CD8-positive, alpha-beta T cell (primary cell): ENCODE measurements at regions of chr16 and their contacts with region 1.

Region 1: DNA sequence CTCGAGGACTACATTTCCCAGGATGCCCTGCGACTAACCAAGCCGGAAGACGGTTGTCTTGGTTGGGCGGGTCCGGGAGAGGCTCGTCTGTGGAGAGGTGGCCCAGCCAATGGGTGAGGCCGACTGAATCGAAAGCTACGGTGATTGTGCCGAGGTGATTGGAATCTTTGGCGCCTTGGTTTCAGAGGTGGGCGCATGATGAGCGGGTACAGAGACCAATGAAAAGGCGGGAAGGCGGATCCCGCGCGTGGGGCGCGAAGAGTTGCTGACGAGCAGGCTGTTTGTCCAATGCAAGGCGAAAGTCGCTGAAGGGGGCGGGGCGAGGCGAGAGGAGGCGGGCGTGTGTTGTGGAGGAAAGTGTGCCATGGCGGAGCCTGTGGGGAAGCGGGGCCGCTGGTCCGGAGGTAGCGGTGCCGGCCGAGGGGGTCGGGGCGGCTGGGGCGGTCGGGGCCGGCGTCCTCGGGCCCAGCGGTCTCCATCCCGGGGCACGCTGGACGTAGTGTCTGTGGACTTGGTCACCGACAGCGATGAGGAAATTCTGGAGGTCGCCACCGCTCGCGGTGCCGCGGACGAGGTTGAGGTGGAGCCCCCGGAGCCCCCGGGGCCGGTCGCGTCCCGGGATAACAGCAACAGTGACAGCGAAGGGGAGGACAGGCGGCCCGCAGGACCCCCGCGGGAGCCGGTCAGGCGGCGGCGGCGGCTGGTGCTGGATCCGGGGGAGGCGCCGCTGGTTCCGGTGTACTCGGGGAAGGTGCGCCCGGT is at the start of gene NFATC2IP:
- DNase-seq: peak; percentile 98 to 100 (median 100)
- ATAC-seq: peak; percentile 92
- H3K4me3 ChIP-seq: peak within 1 kb of the TSS; percentile 67 to 75
- H3K4me3 Mint-ChIP-seq: peak within 1 kb of the TSS; percentile 89
- H3K27ac ChIP-seq: peak within 1 kb of the TSS; percentile 61 to 73
- H3K27ac Mint-ChIP-seq: peak within 1 kb of the TSS; percentile 85
- H3K4me1 ChIP-seq: peaks cover 17% of the 10 kb centered on the region
- H3K4me1 Mint-ChIP-seq: peaks cover 29% of the 10 kb centered on the region
- H3K27me3 ChIP-seq: no peaks in the 10 kb centered on the region
- H3K27me3 Mint-ChIP-seq: no peaks in the 10 kb centered on the region
- CTCF ChIP-seq: no peak
- total RNA-seq, gene NFATC2IP: 45.8 to 52.5 TPM

Region 2: GRCh38 chr16:28823872-28824716 is 126.7 kb before region 1 on chr16:
- CTCF ChIA-PET with region 1: no interaction called
- POLR2A ChIA-PET with region 1: interaction called, 3 read pairs
- intact Hi-C with region 1: loop called (anchors 1 kb)
- DNase-seq: peak; percentile 88 to 97 (median 95)
- ATAC-seq: peak; percentile 67
- H3K4me3 ChIP-seq: peak overlapping the region; percentile 74 to 94
- H3K4me3 Mint-ChIP-seq: peak overlapping the region; percentile 97
- H3K27ac ChIP-seq: peak overlapping the region; percentile 93 to 94
- H3K27ac Mint-ChIP-seq: peak overlapping the region; percentile 99
- H3K4me1 ChIP-seq: peaks cover 30% of the 10 kb centered on the region
- H3K4me1 Mint-ChIP-seq: peaks cover 43% of the 10 kb centered on the region
- H3K27me3 ChIP-seq: no peaks in the 10 kb centered on the region
- H3K27me3 Mint-ChIP-seq: no peaks in the 10 kb centered on the region
- CTCF ChIP-seq: peak; percentile 21

Region 3: GRCh38 chr16:28873536-28874201 is 77.2 kb before region 1 on chr16:
- CTCF ChIA-PET with region 1: interaction called, 32 read pairs
- POLR2A ChIA-PET with region 1: interaction called, 3 read pairs
- intact Hi-C with region 1: no loop called
- DNase-seq: peak; percentile 37 to 73 (median 64)
- ATAC-seq: peak; percentile 96
- H3K4me3 ChIP-seq: no peak overlapping the region
- H3K4me3 Mint-ChIP-seq: no peak overlapping the region
- H3K27ac ChIP-seq: no peak overlapping the region
- H3K27ac Mint-ChIP-seq: no peak overlapping the region
- H3K4me1 ChIP-seq: no peaks in the 10 kb centered on the region
- H3K4me1 Mint-ChIP-seq: peaks cover 1% of the 10 kb centered on the region
- H3K27me3 ChIP-seq: no peaks in the 10 kb centered on the region
- H3K27me3 Mint-ChIP-seq: no peaks in the 10 kb centered on the region
- CTCF ChIP-seq: peak; percentile 66

Region 4: GRCh38 chr16:28930652-28931051 is 20.2 kb before region 1 on chr16:
- CTCF ChIA-PET with region 1: interaction called, 18 read pairs
- POLR2A ChIA-PET with region 1: interaction called, 18 read pairs
- intact Hi-C with region 1: loop called (anchors 1 kb)
- DNase-seq: peak in 1 of 9 experiments; percentile 51
- ATAC-seq: no peak
- H3K4me3 ChIP-seq: no peak overlapping the region
- H3K4me3 Mint-ChIP-seq: peak overlapping the region; percentile 5
- H3K27ac ChIP-seq: peak overlapping the region in 1 of 2 experiments; percentile 53
- H3K27ac Mint-ChIP-seq: peak overlapping the region; percentile 69
- H3K4me1 ChIP-seq: peaks cover 17% of the 10 kb centered on the region
- H3K4me1 Mint-ChIP-seq: peaks cover 25% of the 10 kb centered on the region
- H3K27me3 ChIP-seq: no peaks in the 10 kb centered on the region
- H3K27me3 Mint-ChIP-seq: no peaks in the 10 kb centered on the region
- CTCF ChIP-seq: no peak

Region 5: GRCh38 chr16:28984619-28985135 is 33.8 kb after region 1 on chr16 and contains the start of gene LAT:
- CTCF ChIA-PET with region 1: interaction called, 3 read pairs
- POLR2A ChIA-PET with region 1: interaction called, 5 read pairs
- intact Hi-C with region 1: loop called in 1 of 2 experiments (anchors 1 kb)
- DNase-seq: peak; percentile 60 to 91 (median 85)
- ATAC-seq: peak; percentile 69
- H3K4me3 ChIP-seq: peak within 1 kb of the TSS; percentile 95 to 100
- H3K4me3 Mint-ChIP-seq: peak within 1 kb of the TSS; percentile 99
- H3K27ac ChIP-seq: peak within 1 kb of the TSS; percentile 71 to 76
- H3K27ac Mint-ChIP-seq: peak within 1 kb of the TSS; percentile 95
- H3K4me1 ChIP-seq: peaks cover 54% of the 10 kb centered on the region
- H3K4me1 Mint-ChIP-seq: peaks cover 49% of the 10 kb centered on the region
- H3K27me3 ChIP-seq: no peaks in the 10 kb centered on the region
- H3K27me3 Mint-ChIP-seq: no peaks in the 10 kb centered on the region
- CTCF ChIP-seq: no peak
- total RNA-seq, gene LAT: 175 to 176 TPM